Activated CD8-positive, alpha-beta T cell treated with anti-CD3 and anti-CD28 coated beads, Interleukin-2, amount 10 ng/mL, durations not matched to agents 7 days and 5 days (primary cell): ENCODE measurements at regions of chr12 and their contacts with region 1.

Region 1: DNA sequence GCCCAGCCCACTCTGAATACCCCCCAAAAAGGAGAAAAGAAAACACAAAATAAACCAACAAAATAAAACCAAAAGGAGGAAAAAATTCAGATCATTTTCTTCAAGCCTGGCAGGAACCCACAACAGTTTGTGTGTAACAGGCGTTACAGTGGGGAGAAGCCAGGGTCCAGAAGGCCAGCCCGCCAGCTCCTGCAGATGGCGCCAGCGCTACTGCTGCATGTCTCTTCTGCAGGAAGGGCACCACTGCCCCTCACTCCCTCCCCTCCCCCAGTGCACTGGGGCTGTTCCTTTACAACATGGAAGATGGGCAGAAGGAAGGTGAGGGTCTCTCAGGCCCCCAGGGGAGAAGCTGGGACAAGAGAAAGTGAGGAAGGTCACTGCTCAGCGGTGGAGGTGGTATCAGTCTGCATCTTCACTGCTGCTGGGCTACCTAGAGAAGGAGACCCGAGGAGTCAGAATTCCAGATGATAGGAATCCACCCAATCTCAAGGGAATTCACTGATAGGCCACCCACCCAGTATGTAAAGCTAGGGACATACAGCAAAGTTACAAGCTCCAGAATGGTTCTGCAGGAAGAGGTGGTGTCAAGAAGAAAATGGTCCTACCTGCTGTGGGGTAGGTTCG is 2.3 kb upstream of the NOP2 start:
- DNase-seq: peak; percentile 67
- ATAC-seq: no peak
- H3K4me3 Mint-ChIP-seq: no peak overlapping the region
- H3K27ac Mint-ChIP-seq: peak overlapping the region; percentile 60
- H3K4me1 Mint-ChIP-seq: peaks cover 40% of the 10 kb centered on the region
- H3K27me3 Mint-ChIP-seq: no peaks in the 10 kb centered on the region

Region 2: GRCh38 chr12:6606293-6607131 is 36.1 kb after region 1 on chr12:
- CTCF ChIA-PET with region 1: interaction called, 20 read pairs
- POLR2A ChIA-PET with region 1: interaction called, 4 read pairs
- DNase-seq: peak; percentile 65
- ATAC-seq: peak; percentile 27
- H3K4me3 Mint-ChIP-seq: no peak overlapping the region
- H3K27ac Mint-ChIP-seq: peak overlapping the region; percentile 84
- H3K4me1 Mint-ChIP-seq: peaks cover 57% of the 10 kb centered on the region
- H3K27me3 Mint-ChIP-seq: no peaks in the 10 kb centered on the region

Region 3: GRCh38 chr12:6627616-6628015 is 57.2 kb after region 1 on chr12:
- CTCF ChIA-PET with region 1: no interaction called
- POLR2A ChIA-PET with region 1: no interaction called
- DNase-seq: peak; percentile 69
- ATAC-seq: peak; percentile 75
- H3K4me3 Mint-ChIP-seq: peak overlapping the region; percentile 78
- H3K27ac Mint-ChIP-seq: peak overlapping the region; percentile 83
- H3K4me1 Mint-ChIP-seq: peaks cover 46% of the 10 kb centered on the region
- H3K27me3 Mint-ChIP-seq: no peaks in the 10 kb centered on the region

Region 4: DNA sequence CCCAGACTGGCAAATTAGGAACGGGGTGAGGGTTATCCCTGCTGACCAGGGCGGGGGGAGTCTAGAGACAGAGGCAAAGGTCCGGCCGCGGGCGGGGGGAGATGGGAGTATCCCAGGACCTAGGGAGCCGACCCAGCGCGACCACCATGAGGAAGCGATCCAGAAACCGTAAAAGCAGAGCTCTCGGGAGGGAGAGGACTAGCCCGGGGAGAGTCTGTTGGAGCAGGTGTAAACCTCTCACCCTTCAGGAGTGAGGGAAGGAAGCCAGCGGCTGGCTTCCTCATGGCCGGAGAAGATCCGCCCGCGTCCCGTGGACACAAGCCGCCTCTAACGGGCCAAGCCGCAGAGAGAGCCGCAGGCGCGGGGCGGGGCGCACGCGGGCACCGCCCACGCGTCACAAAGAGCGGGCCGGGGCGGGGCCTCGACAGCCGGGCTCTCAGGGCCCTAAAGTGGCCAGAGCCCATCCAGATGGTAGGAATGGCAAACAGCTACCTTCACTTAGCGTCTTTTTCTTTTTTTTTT is 76.8 kb after region 1 on chr12 and contains the start of gene ACRBP:
- CTCF ChIA-PET with region 1: no interaction called
- POLR2A ChIA-PET with region 1: no interaction called
- DNase-seq: peak; percentile 35
- ATAC-seq: peak; percentile 84
- H3K4me3 Mint-ChIP-seq: peak within 1 kb of the TSS; percentile 51
- H3K27ac Mint-ChIP-seq: peak within 1 kb of the TSS; percentile 10
- H3K4me1 Mint-ChIP-seq: peaks cover 18% of the 10 kb centered on the region
- H3K27me3 Mint-ChIP-seq: peaks cover 5% of the 10 kb centered on the region
- total RNA-seq, gene ACRBP: 0.76 to 1.7 TPM